Dorsolateral prefrontal cortex (tissue), 120 donors: ENCODE measurements at regions of chr10 and their contacts with region 1.

Region 1: DNA sequence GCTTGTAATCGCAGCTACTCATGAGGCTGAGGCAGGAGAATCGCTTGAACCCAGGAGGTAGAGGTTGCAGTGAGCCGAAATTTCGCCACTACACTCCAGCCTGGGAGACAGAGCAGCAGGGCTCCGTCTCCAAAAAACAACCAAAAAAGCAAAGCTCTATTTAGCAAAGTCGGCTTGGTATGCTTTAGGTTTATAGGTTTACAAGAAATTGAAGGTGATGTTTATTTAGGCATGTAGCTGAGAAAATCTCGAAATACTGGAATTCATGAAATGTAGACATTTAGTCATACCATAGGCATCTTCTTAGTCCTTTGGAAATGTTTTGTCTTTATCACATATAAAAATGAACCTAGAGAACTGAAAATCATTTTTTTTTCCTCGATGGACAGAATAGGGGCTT is 453.8 kb upstream of the ANKRD30A start:
- DNase-seq: no peak
- H3K4me3 ChIP-seq: no peak overlapping the region
- H3K27ac ChIP-seq: no peak overlapping the region
- H3K27me3 ChIP-seq: no peaks in the 10 kb centered on the region
- CTCF ChIP-seq: no peak

Region 2: DNA sequence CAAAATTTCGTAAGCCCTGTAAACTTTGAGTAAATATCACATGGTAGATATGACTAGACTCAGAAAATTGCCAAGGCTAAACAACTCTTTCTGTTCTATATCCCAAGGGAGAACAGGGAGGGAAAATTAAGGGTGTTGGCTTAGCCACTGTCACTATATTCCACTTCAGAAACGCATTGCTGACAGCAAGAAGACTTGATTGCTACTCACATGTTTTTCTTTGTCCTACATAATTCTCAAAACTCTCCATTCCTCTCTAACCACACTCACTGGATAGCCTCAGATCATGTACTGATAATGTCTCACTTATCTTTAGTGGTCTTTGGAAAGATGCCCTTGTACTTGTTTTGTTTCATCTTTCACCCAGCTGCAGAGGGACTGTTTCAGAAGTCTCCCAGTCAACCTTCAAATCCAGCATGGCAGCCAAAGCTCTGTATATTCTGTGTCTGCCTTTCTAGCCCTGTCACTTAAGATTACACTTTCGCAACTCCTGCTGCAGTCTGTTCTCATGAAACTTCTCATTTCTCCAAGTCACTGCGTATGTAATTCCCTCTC is 447.1 kb before region 1 on chr10:
- intact Hi-C with region 1: loop called in 1 of 2 experiments (anchors 5 kb)
- DNase-seq: no peak
- H3K4me3 ChIP-seq: no peak overlapping the region
- H3K27ac ChIP-seq: no peak overlapping the region
- H3K27me3 ChIP-seq: peaks cover 0 to 15% (median 0%) of the 10 kb centered on the region in 45 donors
- CTCF ChIP-seq: no peak

Region 3: DNA sequence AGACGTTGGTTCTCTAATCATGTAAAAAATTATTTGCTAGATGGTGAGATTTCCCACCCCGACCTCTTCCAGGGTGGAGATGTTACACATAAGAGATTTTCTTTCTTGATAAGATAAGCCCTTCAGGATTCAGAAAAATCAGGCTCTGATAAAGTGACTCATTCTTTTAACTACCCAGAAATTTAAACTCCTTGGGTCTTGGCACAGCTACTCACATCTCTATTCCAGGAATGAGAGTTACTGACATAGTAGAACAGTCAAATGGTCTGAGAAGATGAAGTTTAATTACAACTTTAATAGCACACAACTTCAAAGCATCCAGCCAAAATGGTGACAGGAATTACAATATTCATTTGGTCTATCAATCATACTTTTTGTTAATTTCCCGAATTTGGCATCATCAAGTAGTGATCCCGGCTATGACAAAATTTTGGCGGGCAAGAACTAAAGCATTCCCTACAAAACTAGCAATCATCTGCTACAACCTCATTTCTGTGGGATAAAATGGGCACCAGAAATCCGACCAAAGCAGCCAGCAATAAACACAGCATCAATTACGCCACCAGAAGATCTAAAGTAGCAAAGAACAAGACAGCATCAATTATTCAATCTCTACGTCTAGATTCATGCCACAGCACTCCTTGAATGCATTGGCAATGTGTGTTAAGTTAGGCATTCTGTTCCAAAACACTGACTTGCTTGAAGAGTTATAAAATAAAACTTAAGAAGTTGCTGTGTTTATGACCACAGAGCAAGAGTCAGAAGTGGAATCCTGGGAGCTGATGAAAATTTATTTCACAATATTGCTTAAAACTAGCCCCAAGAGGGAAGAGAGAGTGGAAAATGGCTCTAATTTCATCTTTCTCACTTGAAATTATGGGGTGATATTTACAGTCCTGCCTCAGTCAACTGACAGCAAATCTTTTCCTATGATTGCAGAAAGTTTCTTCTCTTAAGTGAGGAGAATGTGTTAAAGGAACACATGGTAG is 111.9 kb before region 1 on chr10:
- intact Hi-C with region 1: no loop called
- DNase-seq: no peak
- H3K4me3 ChIP-seq: no peak overlapping the region
- H3K27ac ChIP-seq: no peak overlapping the region
- H3K27me3 ChIP-seq: no peaks in the 10 kb centered on the region
- CTCF ChIP-seq: no peak